ENCODE measurements at regions of chr6 and their contacts with region 1.

Region 1: DNA sequence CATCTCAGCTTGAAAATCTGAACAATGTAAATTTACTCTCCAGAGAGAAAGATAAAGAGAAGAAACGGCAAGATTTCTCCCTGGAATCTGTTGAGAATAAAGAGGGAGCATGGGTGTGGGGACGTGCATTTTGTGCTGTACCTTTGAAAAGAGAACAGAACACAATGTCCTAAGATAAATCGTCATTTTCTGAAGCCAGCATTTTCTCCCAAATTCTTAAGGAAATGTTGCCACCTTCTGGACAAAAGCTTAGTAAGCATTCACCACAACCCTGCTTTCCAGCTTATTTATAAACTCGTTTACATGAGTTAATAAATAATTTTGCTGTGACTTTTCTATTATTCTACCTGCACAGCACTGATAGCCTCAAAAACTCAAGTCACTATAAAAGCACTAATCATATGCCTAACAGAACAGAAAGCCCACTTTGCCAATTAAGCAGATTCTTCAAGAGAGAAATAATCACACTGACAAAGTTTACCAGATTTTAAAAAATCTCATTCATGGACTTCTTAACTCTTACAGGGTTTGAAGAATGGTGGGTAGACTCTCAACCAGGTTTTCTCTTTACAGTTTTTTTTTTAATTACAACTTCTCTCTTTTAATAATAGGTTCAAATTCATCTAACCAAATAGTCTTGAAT is 155.8 kb downstream of the MBOAT1 start:
- DNase-seq: no peak
- ATAC-seq: no peak
- H3K4me3 ChIP-seq: no peak overlapping the region
- H3K4me3 Mint-ChIP-seq: no peak overlapping the region
- H3K27ac ChIP-seq: no peak overlapping the region
- H3K27ac Mint-ChIP-seq: no peak overlapping the region
- H3K4me1 ChIP-seq: no peaks in the 10 kb centered on the region
- H3K4me1 Mint-ChIP-seq: peaks cover 0 to 5% (median 0%) of the 10 kb centered on the region in 7 donors
- H3K27me3 ChIP-seq: no peaks in the 10 kb centered on the region
- H3K27me3 Mint-ChIP-seq: peaks cover 0 to 2% (median 0%) of the 10 kb centered on the region in 5 donors

Region 2: DNA sequence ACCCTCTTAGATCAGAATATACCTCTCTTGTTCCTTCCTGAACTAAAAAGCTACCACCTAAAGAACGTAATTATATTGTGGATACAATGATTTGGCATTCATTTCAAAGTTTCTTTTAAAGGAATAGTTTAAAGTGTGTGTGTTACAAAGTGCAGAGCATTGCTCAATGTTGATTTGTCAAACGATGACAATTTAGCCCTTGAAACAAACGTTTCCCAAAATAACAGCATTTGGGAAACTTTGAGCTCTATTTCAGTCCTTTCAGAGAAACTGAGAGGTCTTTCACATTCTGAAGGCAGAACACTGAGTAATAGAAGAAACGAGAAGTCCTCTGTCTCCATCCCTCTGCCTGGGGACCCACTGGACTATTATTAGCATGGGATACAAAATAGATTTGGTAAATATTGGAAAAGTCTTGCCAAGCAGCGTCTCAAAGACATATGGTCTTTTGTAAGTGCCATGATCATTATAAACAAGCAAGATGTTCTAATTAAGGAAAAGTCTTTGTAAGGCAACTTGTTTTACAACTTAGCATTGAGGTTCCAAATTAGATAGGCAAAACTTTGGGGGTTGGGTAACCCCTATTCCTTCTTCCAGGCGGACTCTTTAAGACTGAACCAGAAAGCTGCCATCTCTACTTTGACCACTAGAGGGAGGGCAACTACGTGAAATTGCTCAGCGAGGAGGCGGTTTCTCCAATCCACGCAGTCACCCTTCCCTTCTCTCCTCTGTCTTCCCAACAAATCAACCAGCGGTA is 1460.5 kb before region 1 on chr6:
- CTCF ChIA-PET with region 1: no interaction called
- POLR2A ChIA-PET with region 1: no interaction called
- intact Hi-C with region 1: loop called in 1 of 2 experiments (anchors 10 kb)
- DNase-seq: peak in 6 of 9 donors; percentile 9 to 30 (median 21)
- ATAC-seq: peak; percentile 63
- H3K4me3 ChIP-seq: no peak overlapping the region
- H3K4me3 Mint-ChIP-seq: peak overlapping the region in 3 of 10 donors; percentile 12 to 47 (median 39)
- H3K27ac ChIP-seq: no peak overlapping the region
- H3K27ac Mint-ChIP-seq: no peak overlapping the region
- H3K4me1 ChIP-seq: no peaks in the 10 kb centered on the region
- H3K4me1 Mint-ChIP-seq: peaks cover 0 to 2% (median 0%) of the 10 kb centered on the region in 7 donors
- H3K27me3 ChIP-seq: no peaks in the 10 kb centered on the region
- H3K27me3 Mint-ChIP-seq: peaks cover 2 to 26% (median 17%) of the 10 kb centered on the region in 5 donors

Region 3: GRCh38 chr6:18990059-18990978 is 1066.2 kb before region 1 on chr6:
- CTCF ChIA-PET with region 1: no interaction called
- POLR2A ChIA-PET with region 1: no interaction called
- intact Hi-C with region 1: loop called in 1 of 2 experiments (anchors 5 kb)
- DNase-seq: peak in 2 of 9 donors; percentile 1 to 23
- ATAC-seq: no peak
- H3K4me3 ChIP-seq: no peak overlapping the region
- H3K4me3 Mint-ChIP-seq: no peak overlapping the region
- H3K27ac ChIP-seq: no peak overlapping the region
- H3K27ac Mint-ChIP-seq: no peak overlapping the region
- H3K4me1 ChIP-seq: no peaks in the 10 kb centered on the region
- H3K4me1 Mint-ChIP-seq: no peaks in the 10 kb centered on the region
- H3K27me3 ChIP-seq: no peaks in the 10 kb centered on the region
- H3K27me3 Mint-ChIP-seq: peaks cover 0 to 8% (median 0%) of the 10 kb centered on the region in 5 donors

Region 4: DNA sequence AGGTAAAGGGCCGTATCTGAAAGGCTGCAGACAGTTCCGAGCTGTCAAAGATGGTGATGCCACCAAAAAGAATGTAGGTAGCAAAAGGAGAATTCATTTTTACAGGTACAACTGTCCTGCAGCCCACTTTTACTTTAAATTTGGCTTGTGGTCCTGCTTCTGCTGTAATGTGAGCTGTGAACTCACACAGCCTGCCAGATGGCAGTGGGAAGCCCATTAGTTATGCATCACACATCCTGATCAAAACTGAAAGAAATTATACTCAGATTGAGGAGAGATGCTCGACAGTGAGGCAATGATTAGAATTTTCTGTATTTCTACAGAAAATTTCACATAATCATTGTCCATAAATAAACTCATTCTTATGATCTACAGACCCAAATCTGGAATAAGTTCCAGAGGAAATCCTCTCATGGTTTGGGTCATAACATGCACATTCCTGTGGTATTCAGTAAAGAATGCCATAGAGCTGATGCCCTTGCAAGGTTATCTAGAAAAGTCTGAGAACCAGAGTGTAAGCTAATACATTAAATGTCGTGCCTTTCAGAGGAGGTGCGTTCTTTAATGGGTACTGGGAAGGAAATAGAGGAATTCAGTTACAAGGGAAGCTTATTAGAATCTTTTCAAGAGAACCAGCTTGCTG is 321.3 kb after region 1 on chr6:
- CTCF ChIA-PET with region 1: no interaction called
- POLR2A ChIA-PET with region 1: no interaction called
- intact Hi-C with region 1: no loop called
- DNase-seq: no peak
- ATAC-seq: peak; percentile 49
- H3K4me3 ChIP-seq: no peak overlapping the region
- H3K4me3 Mint-ChIP-seq: peak overlapping the region in 1 of 10 donors; percentile 40
- H3K27ac ChIP-seq: no peak overlapping the region
- H3K27ac Mint-ChIP-seq: peak overlapping the region in 2 of 9 donors; percentile 63 to 71
- H3K4me1 ChIP-seq: peaks cover 11 to 14% of the 10 kb centered on the region in 2 donors
- H3K4me1 Mint-ChIP-seq: peaks cover 8 to 28% (median 25%) of the 10 kb centered on the region in 7 donors
- H3K27me3 ChIP-seq: no peaks in the 10 kb centered on the region
- H3K27me3 Mint-ChIP-seq: peaks cover 0 to 2% (median 0%) of the 10 kb centered on the region in 5 donors